Head of caudate nucleus (tissue), 42 donors: ENCODE measurements at regions of chr6 and their contacts with region 1.

Region 1: GRCh38 chr6:110958329-110959192 is at the start of gene GTF3C6:
- DNase-seq: peak; percentile 92 to 98 (median 96)

Region 2: GRCh38 chr6:110682460-110682853 is 276.1 kb before region 1 on chr6:
- intact Hi-C with region 1: loop called (anchors 5 kb)
- DNase-seq: peak in 31 of 42 donors; percentile 22 to 90 (median 71)

Region 3: GRCh38 chr6:110815217-110816109 is 143.1 kb before region 1 on chr6 and contains the start of gene CDK19:
- intact Hi-C with region 1: loop called (anchors 5 kb)
- DNase-seq: peak; percentile 96 to 99 (median 98)

Region 4: DNA sequence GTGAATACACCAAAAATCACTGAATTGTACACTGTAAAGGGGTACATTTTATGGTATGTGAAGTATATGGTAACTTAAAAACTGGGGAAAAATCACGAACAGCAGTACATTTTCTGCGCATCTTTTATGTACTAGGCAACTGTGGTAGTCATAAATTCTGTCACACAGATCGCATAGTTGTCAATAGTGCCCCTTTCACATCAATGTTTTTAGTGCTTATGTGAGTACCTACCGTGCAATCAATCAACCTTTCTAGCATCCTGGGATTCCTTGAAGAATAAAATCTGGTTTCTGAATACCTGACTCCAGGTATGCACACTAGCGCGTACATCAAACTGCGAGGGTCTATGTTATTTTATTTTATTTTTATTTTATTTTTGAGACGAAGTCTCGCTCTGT is 22.6 kb after region 1 on chr6:
- intact Hi-C with region 1: loop called (anchors 1 kb)
- DNase-seq: no peak

Region 5: DNA sequence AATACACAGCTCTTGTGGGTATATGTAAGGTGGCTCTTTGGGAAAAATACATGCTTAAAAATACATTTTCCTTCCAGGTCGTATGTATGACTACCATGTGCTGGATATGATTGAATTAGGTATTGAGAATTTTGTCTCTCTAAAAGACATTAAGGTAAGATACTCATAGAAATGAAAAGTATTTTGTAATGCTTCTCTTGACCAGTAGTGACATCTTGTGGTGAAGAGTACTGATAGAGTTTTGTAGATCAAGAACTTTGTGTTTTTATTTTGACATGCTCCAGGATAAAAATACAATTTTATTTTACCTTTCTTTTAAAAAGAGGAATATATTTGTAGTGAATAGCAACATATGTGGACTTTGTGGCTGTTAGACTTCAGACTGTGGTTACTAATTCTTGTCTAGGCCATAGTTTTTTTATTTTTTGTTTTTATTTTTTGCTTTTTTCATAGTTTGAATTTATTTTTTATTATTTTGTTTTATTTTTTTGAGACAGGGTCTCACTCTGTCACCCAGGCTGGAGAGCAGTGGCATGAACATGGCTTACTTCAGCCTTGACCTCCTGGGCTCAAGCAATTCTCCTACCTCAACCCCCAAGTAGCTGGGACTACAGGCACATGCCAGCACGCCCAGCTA is 41.2 kb after region 1 on chr6:
- intact Hi-C with region 1: no loop called
- DNase-seq: no peak

Region 6: GRCh38 chr6:111038534-111039252 is 80.1 kb after region 1 on chr6:
- intact Hi-C with region 1: no loop called
- DNase-seq: no peak

Region 7: GRCh38 chr6:111105578-111105977 is 147.0 kb after region 1 on chr6:
- intact Hi-C with region 1: no loop called
- DNase-seq: no peak

Region 8: DNA sequence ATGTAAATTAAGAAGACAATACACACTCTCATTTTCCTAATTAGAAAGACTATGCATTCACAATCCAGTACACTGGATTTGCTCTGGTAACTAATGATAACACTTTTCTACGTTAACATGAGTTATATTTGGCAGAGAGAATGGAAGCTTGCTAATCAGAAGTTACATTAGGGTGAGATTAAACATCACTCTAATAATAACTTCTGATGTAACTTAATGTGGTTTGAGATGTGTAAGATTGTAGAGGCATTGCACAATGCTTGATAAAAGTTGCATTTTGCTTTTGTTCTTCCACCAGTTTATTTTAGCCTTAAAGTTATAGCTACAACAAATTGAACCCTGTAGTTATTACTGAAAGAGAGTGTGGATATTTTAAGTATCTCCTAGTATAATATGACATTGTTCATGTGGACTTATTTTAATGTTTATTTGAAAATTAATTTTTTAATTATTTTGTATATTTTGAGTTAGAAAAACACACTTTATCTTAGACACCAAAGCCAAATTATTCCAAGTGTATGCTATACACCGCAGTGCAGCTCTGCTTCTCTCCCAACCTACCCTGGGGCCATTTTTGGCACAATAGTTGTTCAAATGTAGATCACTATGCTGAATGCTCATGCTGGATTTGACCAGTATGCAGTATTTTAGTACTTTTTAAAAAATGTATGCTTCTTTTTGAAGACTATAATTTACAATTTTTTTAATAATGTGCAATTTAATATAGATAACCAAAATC is 272.0 kb after region 1 on chr6:
- intact Hi-C with region 1: no loop called
- DNase-seq: no peak